Ovary (tissue), 10 donors: ENCODE measurements at regions of chr2 and their contacts with region 1.

Region 1: GRCh38 chr2:112726497-112727190 is 5.8 kb downstream of the NT5DC4 start:
- DNase-seq: peak; percentile 44 to 78 (median 68)
- H3K4me3 ChIP-seq: no peak overlapping the region
- H3K27ac ChIP-seq: no peak overlapping the region
- H3K4me1 ChIP-seq: no peaks in the 10 kb centered on the region
- H3K27me3 ChIP-seq: no peaks in the 10 kb centered on the region
- CTCF ChIP-seq: peak; percentile 26 to 50 (median 45)
- EP300 ChIP-seq: no peak
- POLR2A ChIP-seq: no peak

Region 2: GRCh38 chr2:112159454-112159921 is 567.2 kb before region 1 on chr2:
- intact Hi-C with region 1: no loop called
- DNase-seq: no peak
- H3K4me3 ChIP-seq: no peak overlapping the region
- H3K27ac ChIP-seq: no peak overlapping the region
- H3K4me1 ChIP-seq: no peaks in the 10 kb centered on the region
- H3K27me3 ChIP-seq: no peaks in the 10 kb centered on the region
- CTCF ChIP-seq: no peak
- EP300 ChIP-seq: no peak
- POLR2A ChIP-seq: no peak

Region 3: GRCh38 chr2:112474844-112475486 is 251.7 kb before region 1 on chr2:
- intact Hi-C with region 1: no loop called
- DNase-seq: no peak
- H3K4me3 ChIP-seq: no peak overlapping the region
- H3K27ac ChIP-seq: no peak overlapping the region
- H3K4me1 ChIP-seq: no peaks in the 10 kb centered on the region
- H3K27me3 ChIP-seq: no peaks in the 10 kb centered on the region
- CTCF ChIP-seq: no peak
- EP300 ChIP-seq: no peak
- POLR2A ChIP-seq: no peak

Region 4: DNA sequence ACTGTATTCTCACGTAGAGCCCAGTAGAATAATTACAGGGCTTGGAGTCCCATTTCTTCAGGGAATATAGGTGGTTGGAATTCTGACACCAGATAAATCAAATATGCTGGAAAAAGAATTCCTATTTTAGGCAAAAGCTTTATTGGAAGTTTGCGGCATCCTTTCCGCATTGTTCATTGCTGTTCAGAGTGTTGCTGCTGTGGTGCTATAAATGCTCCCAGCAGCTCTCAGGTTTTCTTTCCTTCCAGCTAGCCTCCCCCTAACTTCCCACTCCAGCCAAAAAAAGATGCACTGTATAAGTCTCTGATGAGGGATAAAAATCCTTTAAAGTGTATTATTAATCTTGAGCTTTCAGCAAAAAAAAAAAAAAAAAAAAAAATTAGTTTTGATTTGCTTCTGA is 209.8 kb before region 1 on chr2:
- intact Hi-C with region 1: no loop called
- DNase-seq: no peak
- H3K4me3 ChIP-seq: no peak overlapping the region
- H3K27ac ChIP-seq: no peak overlapping the region
- H3K4me1 ChIP-seq: no peaks in the 10 kb centered on the region
- H3K27me3 ChIP-seq: no peaks in the 10 kb centered on the region
- CTCF ChIP-seq: no peak
- EP300 ChIP-seq: no peak
- POLR2A ChIP-seq: no peak

Region 5: DNA sequence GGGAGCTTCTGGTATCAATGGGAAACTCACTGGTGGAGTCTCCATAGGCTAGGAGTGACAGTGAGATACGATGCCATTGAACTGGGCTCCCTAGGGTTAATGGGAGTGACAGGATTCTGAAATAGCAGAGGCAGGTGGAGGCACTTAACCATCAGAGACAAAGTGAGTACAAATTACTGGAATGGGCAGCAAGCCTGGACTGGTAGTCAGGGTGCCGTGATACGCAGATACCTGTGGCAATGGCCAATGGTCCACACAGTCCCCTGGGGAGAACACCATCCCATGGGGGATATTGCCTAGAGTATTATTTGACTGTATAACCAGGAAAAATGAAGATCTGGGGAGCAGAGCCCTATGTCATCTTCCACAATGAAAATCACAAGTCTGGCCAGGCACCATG is 124.9 kb before region 1 on chr2:
- intact Hi-C with region 1: loop called in 1 of 4 experiments (anchors 5 kb)
- DNase-seq: no peak
- H3K4me3 ChIP-seq: no peak overlapping the region
- H3K27ac ChIP-seq: no peak overlapping the region
- H3K4me1 ChIP-seq: peaks cover 1% of the 10 kb centered on the region
- H3K27me3 ChIP-seq: no peaks in the 10 kb centered on the region
- CTCF ChIP-seq: no peak
- EP300 ChIP-seq: no peak
- POLR2A ChIP-seq: no peak

Region 6: DNA sequence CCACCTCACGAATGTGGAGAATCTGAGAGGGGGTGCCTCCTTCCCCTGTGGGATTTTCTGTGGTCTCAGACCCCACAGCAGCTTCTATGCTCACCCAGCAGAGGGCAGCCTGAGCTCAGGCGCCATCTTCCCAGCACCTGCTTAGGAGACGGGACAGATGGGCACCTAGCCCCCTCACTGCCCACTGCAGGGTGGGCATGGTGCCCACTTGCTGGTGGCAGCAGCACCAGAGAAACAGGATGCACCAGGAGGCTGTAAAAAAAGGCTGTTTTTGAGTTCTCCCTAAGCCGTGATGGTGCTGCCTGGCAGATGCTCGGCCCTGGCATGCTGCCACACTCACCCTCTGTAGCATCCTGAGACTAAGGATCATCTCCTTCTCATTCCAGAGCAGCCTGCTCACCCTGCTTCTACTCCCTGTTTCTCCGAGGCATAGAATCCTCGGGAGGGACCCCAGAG is 100.0 kb before region 1 on chr2:
- intact Hi-C with region 1: loop called in 1 of 4 experiments (anchors 10 kb)
- DNase-seq: peak in 4 of 5 donors; percentile 38 to 60 (median 43)
- H3K4me3 ChIP-seq: no peak overlapping the region
- H3K27ac ChIP-seq: no peak overlapping the region
- H3K4me1 ChIP-seq: no peaks in the 10 kb centered on the region
- H3K27me3 ChIP-seq: no peaks in the 10 kb centered on the region
- CTCF ChIP-seq: peak in 1 of 3 donors; percentile 39
- EP300 ChIP-seq: no peak
- POLR2A ChIP-seq: no peak

Region 7: GRCh38 chr2:112782234-112782799 is 55.7 kb after region 1 on chr2:
- intact Hi-C with region 1: no loop called
- DNase-seq: no peak
- H3K4me3 ChIP-seq: no peak overlapping the region
- H3K27ac ChIP-seq: no peak overlapping the region
- H3K4me1 ChIP-seq: no peaks in the 10 kb centered on the region
- H3K27me3 ChIP-seq: no peaks in the 10 kb centered on the region
- CTCF ChIP-seq: no peak
- EP300 ChIP-seq: no peak
- POLR2A ChIP-seq: no peak